GM12878 (cell line): ENCODE measurements at regions of chr9 and their contacts with region 1.

Region 1: GRCh38 chr9:105608721-105609598 is 51.0 kb downstream of the FKTN start:
- DNase-seq: peak; percentile 4
- ATAC-seq: peak; percentile 82
- H3K4me3 ChIP-seq: no peak overlapping the region
- H3K27ac ChIP-seq: no peak overlapping the region
- H3K4me1 ChIP-seq: no peaks in the 10 kb centered on the region
- H3K27me3 ChIP-seq: no peaks in the 10 kb centered on the region
- CTCF ChIP-seq: peak; percentile 36 to 62 (median 36); a peak in 5 of 6 replicates
- EP300 ChIP-seq: no peak
- POLR2A ChIP-seq: no peak
- RAD21 ChIP-seq: peak; percentile 68

Region 2: DNA sequence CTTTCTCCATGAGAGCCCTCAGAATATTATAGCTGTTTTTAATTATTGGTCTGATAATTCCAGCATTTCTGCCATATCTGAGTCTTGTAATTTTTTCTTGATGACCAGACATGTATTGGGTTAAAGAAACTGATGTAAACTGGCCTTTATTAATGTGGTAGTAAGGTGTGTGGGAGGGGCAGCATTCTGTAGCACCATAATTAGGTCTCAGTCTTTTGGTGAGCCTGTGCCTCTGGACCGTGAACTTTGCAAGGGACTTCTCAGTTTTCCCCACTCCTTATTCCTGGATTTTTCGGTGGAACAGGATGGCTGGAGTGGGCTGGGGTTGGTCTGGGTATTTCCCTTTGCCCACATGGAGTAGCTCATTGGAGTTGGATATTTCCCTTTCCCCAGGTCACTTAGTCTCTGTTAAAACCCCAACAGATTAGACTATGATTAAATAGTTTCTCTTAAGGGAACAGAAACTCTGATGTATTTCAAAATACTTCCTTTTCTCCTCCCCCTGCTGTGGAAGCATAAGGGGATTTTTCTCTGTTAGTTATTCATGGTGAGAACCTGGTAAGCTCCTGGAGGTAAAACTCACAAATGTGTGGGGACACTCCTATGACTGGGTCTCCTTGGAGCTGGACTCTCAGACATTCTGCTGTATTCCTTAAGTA is 108.7 kb before region 1 on chr9:
- CTCF ChIA-PET with region 1: no interaction called
- POLR2A ChIA-PET with region 1: no interaction called
- RAD21 ChIA-PET with region 1: interaction called, 3 read pairs
- SMC1A ChIA-PET with region 1: no interaction called
- in situ Hi-C with region 1: no loop called
- intact Hi-C with region 1: loop called (anchors 5 kb)
- DNase-seq: peak; percentile 62
- ATAC-seq: peak; percentile 75
- H3K4me3 ChIP-seq: peak overlapping the region; percentile 69
- H3K27ac ChIP-seq: peak overlapping the region; percentile 71
- H3K4me1 ChIP-seq: peaks cover 16% of the 10 kb centered on the region
- H3K27me3 ChIP-seq: no peaks in the 10 kb centered on the region
- CTCF ChIP-seq: no peak
- EP300 ChIP-seq: peak in 1 of 2 experiments; percentile 50; a peak in 1 of 4 replicates
- POLR2A ChIP-seq: no peak
- RAD21 ChIP-seq: peak; percentile 21; the same call in 1 of the 2 replicates

Region 3: DNA sequence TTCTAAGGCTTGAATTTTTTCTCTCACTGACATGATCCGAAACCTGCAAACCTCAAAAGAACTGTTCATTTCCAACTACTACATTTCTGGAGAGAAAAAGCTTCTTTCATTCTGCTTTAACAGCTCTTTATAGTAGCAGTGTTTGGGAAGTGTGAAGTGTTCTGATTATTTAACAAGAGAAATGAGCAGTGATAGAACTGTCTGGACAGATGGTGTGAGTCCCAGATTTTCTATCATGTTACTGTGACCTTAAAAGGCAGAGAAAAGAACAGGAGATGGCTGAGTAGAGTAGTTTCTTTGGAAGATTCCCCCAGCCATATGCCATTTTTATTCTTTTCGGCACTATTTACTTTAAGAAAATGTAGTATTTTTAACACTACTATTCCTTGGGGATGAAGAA is 12.0 kb after region 1 on chr9:
- CTCF ChIA-PET with region 1: interaction called, 12 read pairs
- POLR2A ChIA-PET with region 1: no interaction called
- RAD21 ChIA-PET with region 1: no interaction called
- SMC1A ChIA-PET with region 1: interaction called, 3 read pairs
- in situ Hi-C with region 1: no loop called
- intact Hi-C with region 1: no loop called
- DNase-seq: no peak
- ATAC-seq: no peak
- H3K4me3 ChIP-seq: no peak overlapping the region
- H3K27ac ChIP-seq: no peak overlapping the region
- H3K4me1 ChIP-seq: no peaks in the 10 kb centered on the region
- H3K27me3 ChIP-seq: no peaks in the 10 kb centered on the region
- CTCF ChIP-seq: no peak
- EP300 ChIP-seq: no peak
- POLR2A ChIP-seq: no peak
- RAD21 ChIP-seq: no peak

Region 4: GRCh38 chr9:105713260-105714019 is 104.5 kb after region 1 on chr9:
- CTCF ChIA-PET with region 1: interaction called, 23 read pairs
- POLR2A ChIA-PET with region 1: no interaction called
- RAD21 ChIA-PET with region 1: interaction called, 8 read pairs
- SMC1A ChIA-PET with region 1: interaction called, 11 read pairs
- in situ Hi-C with region 1: loop called (anchors 5 kb)
- intact Hi-C with region 1: loop called (anchors 1 kb)
- DNase-seq: no peak
- ATAC-seq: no peak
- H3K4me3 ChIP-seq: no peak overlapping the region
- H3K27ac ChIP-seq: no peak overlapping the region
- H3K4me1 ChIP-seq: no peaks in the 10 kb centered on the region
- H3K27me3 ChIP-seq: no peaks in the 10 kb centered on the region
- CTCF ChIP-seq: no peak
- EP300 ChIP-seq: no peak
- POLR2A ChIP-seq: no peak
- RAD21 ChIP-seq: no peak

Region 5: DNA sequence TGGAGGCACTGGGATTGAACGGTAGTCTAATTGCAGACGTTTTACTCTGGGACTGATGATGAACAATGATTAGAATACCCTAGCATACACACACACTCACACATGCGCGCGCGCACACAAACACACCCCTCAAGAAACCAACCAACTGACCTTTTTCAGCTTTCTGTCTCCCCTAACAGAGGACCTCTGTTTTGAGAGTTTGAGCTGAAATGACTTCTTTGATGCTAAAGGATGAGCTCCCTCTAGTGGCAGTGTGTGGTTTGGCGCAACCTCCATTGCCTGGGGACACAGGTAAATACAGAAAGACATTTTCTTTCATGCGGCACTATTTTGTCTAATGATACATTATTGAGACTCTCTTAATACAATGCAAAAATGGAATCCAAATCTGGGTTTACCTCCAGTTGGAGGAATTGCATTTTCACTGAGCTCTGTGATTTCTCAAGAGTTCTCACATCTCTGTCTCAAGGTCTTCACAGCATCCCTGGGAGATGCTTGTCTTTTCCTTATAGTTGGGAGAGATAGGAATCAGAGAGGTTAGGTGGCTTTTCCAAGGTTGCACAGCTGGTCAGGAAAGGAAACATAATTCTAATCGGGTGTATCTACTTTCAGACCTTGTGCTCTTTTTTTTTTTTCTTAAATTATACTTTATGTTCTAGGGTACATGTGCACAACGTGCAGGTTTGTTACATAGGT is 272.8 kb after region 1 on chr9:
- CTCF ChIA-PET with region 1: interaction called, 17 read pairs
- POLR2A ChIA-PET with region 1: no interaction called
- RAD21 ChIA-PET with region 1: interaction called, 4 read pairs
- SMC1A ChIA-PET with region 1: interaction called, 6 read pairs
- in situ Hi-C with region 1: no loop called
- intact Hi-C with region 1: loop called (anchors 1 kb)
- DNase-seq: peak; percentile 25
- ATAC-seq: peak; percentile 87
- H3K4me3 ChIP-seq: no peak overlapping the region
- H3K27ac ChIP-seq: no peak overlapping the region
- H3K4me1 ChIP-seq: peaks cover 13% of the 10 kb centered on the region
- H3K27me3 ChIP-seq: no peaks in the 10 kb centered on the region
- CTCF ChIP-seq: peak; percentile 79 to 89 (median 87)
- EP300 ChIP-seq: no peak
- POLR2A ChIP-seq: no peak
- RAD21 ChIP-seq: peak; percentile 77